Heart right ventricle (tissue), 16 donors: ENCODE measurements at regions of chr11 and their contacts with region 1.

Region 1: GRCh38 chr11:117849781-117850414 is 25.4 kb upstream of the FXYD2 start:
- DNase-seq: no peak
- ATAC-seq: no peak
- H3K4me3 ChIP-seq: no peak overlapping the region
- H3K27ac ChIP-seq: peak overlapping the region in 3 of 10 donors; percentile 17 to 37 (median 36)
- H3K4me1 ChIP-seq: peaks cover 0 to 34% (median 15%) of the 10 kb centered on the region in 9 donors
- H3K27me3 ChIP-seq: no peaks in the 10 kb centered on the region
- CTCF ChIP-seq: no peak

Region 2: DNA sequence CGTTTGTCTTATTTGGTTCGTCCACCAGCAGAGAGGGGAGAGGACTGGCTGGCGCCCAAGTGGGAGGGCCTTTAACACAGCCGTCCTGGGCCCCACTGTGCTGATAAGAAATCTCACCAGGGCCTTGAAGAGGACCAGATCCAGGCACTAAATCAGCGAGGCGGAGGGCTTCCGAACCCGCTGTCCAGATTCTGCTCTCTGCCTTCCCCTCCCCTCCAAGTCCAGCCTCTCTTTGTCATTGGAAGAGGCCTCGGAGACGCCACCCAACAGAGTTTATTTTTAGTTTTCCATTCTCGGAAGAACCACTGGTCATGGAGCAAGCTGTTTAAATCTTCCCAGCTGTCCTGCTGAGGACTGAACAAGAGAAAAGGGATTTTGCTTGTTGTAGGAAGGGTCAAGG is 35.9 kb after region 1 on chr11:
- intact Hi-C with region 1: loop called in 1 of 10 experiments (anchors 5 kb)
- DNase-seq: peak; percentile 85 to 89
- ATAC-seq: peak; percentile 89 to 94 (median 93)
- H3K4me3 ChIP-seq: peak overlapping the region in 9 of 10 donors; percentile 6 to 46 (median 34)
- H3K27ac ChIP-seq: peak overlapping the region; percentile 51 to 91 (median 78)
- H3K4me1 ChIP-seq: peaks cover 0 to 35% (median 19%) of the 10 kb centered on the region in 9 donors
- H3K27me3 ChIP-seq: peaks cover 0 to under 1% (median 0%) of the 10 kb centered on the region in 7 donors
- CTCF ChIP-seq: no peak